A673 (cell line): ENCODE measurements at regions of chrX and their contacts with region 1.

Region 1: DNA sequence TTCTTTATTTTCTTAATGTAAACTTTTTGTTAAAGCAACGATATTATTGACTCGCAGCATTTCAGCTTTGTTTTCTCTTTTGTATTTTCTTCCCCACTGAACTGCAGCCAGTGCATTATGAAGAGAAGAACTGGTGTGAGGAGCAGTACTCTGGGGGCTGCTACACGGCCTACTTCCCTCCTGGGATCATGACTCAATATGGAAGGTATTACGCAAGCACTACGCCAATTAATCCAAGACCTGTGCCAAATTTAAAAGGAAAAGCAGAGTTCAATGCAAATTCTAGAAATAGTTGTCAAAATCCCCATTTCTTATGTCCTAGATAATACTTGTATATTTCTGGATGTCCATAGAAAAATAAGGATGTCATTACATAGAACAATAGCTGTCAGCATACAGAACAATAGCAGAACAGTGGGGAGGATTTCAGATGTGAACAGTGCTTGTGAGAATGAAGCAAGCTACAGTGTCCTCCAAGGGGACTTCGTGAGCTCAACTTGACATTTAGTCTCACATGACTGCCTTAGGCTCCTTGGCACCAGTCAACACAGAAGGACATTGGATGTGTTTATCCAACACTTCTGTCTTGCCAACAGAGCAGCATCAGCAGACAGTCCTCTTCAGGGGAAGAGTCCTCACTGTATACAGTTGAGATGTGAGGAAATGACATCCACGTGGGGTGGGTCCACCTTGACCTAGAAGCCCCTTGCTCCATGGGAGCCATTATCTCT is 85.9 kb downstream of the MAOA start:
- DNase-seq: peak; percentile 45
- H3K4me3 ChIP-seq: no peak overlapping the region
- H3K27ac ChIP-seq: no peak overlapping the region
- H3K4me1 ChIP-seq: no peaks in the 10 kb centered on the region
- H3K27me3 ChIP-seq: no peaks in the 10 kb centered on the region
- CTCF ChIP-seq: no peak

Region 2: GRCh38 chrX:42900947-42901346 is 841.1 kb before region 1 on chrX:
- CTCF ChIA-PET with region 1: no interaction called
- POLR2A ChIA-PET with region 1: no interaction called
- intact Hi-C with region 1: no loop called
- DNase-seq: peak; percentile 1
- H3K4me3 ChIP-seq: no peak overlapping the region
- H3K27ac ChIP-seq: no peak overlapping the region
- H3K4me1 ChIP-seq: no peaks in the 10 kb centered on the region
- H3K27me3 ChIP-seq: no peaks in the 10 kb centered on the region
- CTCF ChIP-seq: no peak

Region 3: DNA sequence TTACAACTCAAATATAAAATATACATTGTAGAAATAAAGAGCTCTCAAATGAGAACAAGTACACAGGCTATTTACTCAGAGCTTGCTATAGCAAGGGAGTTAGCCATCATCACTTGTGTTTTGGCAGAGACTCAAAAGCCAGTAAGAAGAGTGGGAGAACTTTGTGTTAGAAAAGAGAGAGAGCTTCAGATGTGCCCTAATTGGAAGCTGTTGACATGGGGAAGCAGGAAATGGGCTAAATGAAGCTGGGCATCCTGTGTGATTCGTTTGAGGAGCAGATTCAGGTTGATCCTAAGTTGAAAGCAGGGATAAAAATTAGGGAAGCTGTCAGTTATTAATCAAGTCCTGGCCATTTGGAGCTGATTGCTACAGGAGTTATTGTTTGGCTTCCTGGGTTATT is 293.3 kb before region 1 on chrX:
- CTCF ChIA-PET with region 1: no interaction called
- POLR2A ChIA-PET with region 1: no interaction called
- intact Hi-C with region 1: loop called (anchors 5 kb)
- DNase-seq: peak; percentile 36
- H3K4me3 ChIP-seq: no peak overlapping the region
- H3K27ac ChIP-seq: no peak overlapping the region
- H3K4me1 ChIP-seq: no peaks in the 10 kb centered on the region
- H3K27me3 ChIP-seq: no peaks in the 10 kb centered on the region
- CTCF ChIP-seq: no peak